ENCODE measurements at regions of chr2 and their contacts with region 1.

Region 1: GRCh38 chr2:31523871-31524492 is 56.8 kb downstream of the SRD5A2 start:
- DNase-seq: peak; percentile 69
- H3K4me3 ChIP-seq: no peak overlapping the region
- H3K27ac ChIP-seq: no peak overlapping the region
- H3K4me1 ChIP-seq: no peaks in the 10 kb centered on the region
- CTCF ChIP-seq: peak; percentile 95

Region 2: DNA sequence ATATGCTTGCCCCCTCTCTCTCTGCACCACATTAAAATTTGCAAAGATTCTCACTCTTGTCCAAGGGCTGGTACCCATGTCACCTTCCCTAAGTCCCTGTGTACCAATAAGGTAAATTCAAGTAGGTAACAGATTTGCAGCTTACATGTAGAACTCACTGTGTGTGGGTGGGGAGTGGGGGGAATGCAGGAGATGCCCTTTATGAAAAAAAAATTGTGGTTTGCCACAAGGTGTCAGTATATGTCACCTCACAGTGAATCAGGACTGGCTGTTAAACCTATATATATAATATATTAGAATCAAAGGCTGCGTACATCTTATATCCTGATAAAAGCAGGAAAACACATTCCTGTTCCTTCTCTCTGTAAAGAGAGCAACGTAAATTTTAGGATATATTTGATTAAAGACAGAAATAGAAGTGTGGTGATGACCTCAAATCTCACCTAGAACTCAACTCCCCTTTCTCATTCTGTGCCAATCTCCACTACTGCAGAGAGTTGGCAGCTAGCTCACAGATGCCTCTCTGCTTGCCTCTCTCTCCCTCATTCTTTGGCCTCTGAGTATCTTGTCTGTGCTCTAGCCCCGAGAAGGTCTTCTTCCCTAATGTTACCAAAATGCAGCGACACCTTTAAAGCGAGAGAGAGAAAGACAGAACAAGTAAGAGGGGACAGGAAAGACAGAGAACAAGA is 110.0 kb before region 1 on chr2:
- CTCF ChIA-PET with region 1: no interaction called
- POLR2A ChIA-PET with region 1: interaction called, 4 read pairs
- intact Hi-C with region 1: loop called (anchors 2 kb)
- DNase-seq: peak; percentile 32
- H3K4me3 ChIP-seq: no peak overlapping the region
- H3K27ac ChIP-seq: no peak overlapping the region
- H3K4me1 ChIP-seq: peaks cover 3% of the 10 kb centered on the region
- CTCF ChIP-seq: peak; percentile 77

Region 3: GRCh38 chr2:31511376-31511775 is 12.6 kb before region 1 on chr2:
- CTCF ChIA-PET with region 1: no interaction called
- POLR2A ChIA-PET with region 1: no interaction called
- intact Hi-C with region 1: no loop called
- DNase-seq: no peak
- H3K4me3 ChIP-seq: no peak overlapping the region
- H3K27ac ChIP-seq: no peak overlapping the region
- H3K4me1 ChIP-seq: no peaks in the 10 kb centered on the region
- CTCF ChIP-seq: no peak